T-cell (primary cell): ENCODE measurements at regions of chr7 and their contacts with region 1.

Region 1: DNA sequence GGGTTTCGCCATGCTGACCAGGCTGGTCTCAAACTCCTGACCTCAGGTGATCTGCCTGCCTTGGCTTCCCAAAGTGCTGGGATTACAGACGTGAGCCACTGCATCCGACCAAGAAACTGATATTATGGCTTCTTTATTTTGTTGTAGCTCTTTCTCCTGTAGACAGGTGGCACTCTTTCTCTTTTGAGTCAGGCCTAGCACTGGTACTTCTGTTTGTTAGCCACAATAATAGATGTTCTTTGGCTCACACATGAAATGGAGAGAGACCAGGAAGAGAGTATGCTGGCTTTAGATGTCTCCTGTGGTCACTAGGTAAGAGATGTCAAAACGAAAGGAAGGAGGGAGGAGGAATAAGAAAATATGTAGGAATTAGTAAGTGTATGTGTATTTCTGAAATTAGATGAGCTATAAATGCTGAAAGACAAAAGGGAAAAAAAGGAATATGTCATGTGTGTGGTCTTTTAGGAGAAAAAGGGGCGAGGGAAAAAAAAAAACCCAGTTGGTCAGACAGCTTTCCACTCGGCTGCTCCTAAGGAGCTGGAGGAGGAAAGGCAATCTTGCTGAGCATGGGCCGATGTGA is 78.7 kb downstream of the CLEC2L start:
- DNase-seq: peak in 1 of 35 experiments; percentile 50
- ATAC-seq: peak in 3 of 4 experiments; percentile 57 to 63 (median 61)
- H3K4me3 ChIP-seq: no peak overlapping the region
- H3K4me3 Mint-ChIP-seq: no peak overlapping the region
- H3K27ac ChIP-seq: no peak overlapping the region
- H3K27ac Mint-ChIP-seq: no peak overlapping the region
- H3K4me1 ChIP-seq: no peaks in the 10 kb centered on the region
- H3K4me1 Mint-ChIP-seq: no peaks in the 10 kb centered on the region
- H3K27me3 ChIP-seq: no peaks in the 10 kb centered on the region
- H3K27me3 Mint-ChIP-seq: no peaks in the 10 kb centered on the region

Region 2: GRCh38 chr7:139321071-139321745 is 281.0 kb before region 1 on chr7:
- CTCF ChIA-PET with region 1: interaction called in 1 of 2 experiments, 10 read pairs
- POLR2A ChIA-PET with region 1: no interaction called
- DNase-seq: peak in 1 of 35 experiments; percentile 14
- ATAC-seq: no peak
- H3K4me3 ChIP-seq: no peak overlapping the region
- H3K4me3 Mint-ChIP-seq: no peak overlapping the region
- H3K27ac ChIP-seq: no peak overlapping the region
- H3K27ac Mint-ChIP-seq: no peak overlapping the region
- H3K4me1 ChIP-seq: no peaks in the 10 kb centered on the region
- H3K4me1 Mint-ChIP-seq: no peaks in the 10 kb centered on the region
- H3K27me3 ChIP-seq: peaks cover 0 to 5% of the 10 kb centered on the region in 2 experiments
- H3K27me3 Mint-ChIP-seq: no peaks in the 10 kb centered on the region

Region 3: GRCh38 chr7:139591550-139592195 is 10.6 kb before region 1 on chr7:
- CTCF ChIA-PET with region 1: interaction called, 4 to 11 read pairs
- POLR2A ChIA-PET with region 1: interaction called in 1 of 2 experiments, 4 read pairs
- DNase-seq: no peak
- ATAC-seq: no peak
- H3K4me3 ChIP-seq: no peak overlapping the region
- H3K4me3 Mint-ChIP-seq: no peak overlapping the region
- H3K27ac ChIP-seq: no peak overlapping the region
- H3K27ac Mint-ChIP-seq: no peak overlapping the region
- H3K4me1 ChIP-seq: no peaks in the 10 kb centered on the region
- H3K4me1 Mint-ChIP-seq: no peaks in the 10 kb centered on the region
- H3K27me3 ChIP-seq: no peaks in the 10 kb centered on the region
- H3K27me3 Mint-ChIP-seq: no peaks in the 10 kb centered on the region

Region 4: GRCh38 chr7:139620676-139621344 is 18.6 kb after region 1 on chr7:
- CTCF ChIA-PET with region 1: interaction called, 5 to 10 read pairs
- POLR2A ChIA-PET with region 1: interaction called in 1 of 2 experiments, 4 read pairs
- DNase-seq: peak in 32 of 35 experiments; percentile 18 to 64 (median 45)
- ATAC-seq: peak; percentile 59 to 80 (median 65)
- H3K4me3 ChIP-seq: no peak overlapping the region
- H3K4me3 Mint-ChIP-seq: no peak overlapping the region
- H3K27ac ChIP-seq: no peak overlapping the region
- H3K27ac Mint-ChIP-seq: no peak overlapping the region
- H3K4me1 ChIP-seq: peaks cover 15 to 19% of the 10 kb centered on the region in 2 experiments
- H3K4me1 Mint-ChIP-seq: peaks cover 22 to 26% (median 23%) of the 10 kb centered on the region in 3 donors
- H3K27me3 ChIP-seq: no peaks in the 10 kb centered on the region
- H3K27me3 Mint-ChIP-seq: no peaks in the 10 kb centered on the region

Region 5: GRCh38 chr7:139666501-139666900 is 64.3 kb after region 1 on chr7:
- CTCF ChIA-PET with region 1: no interaction called
- POLR2A ChIA-PET with region 1: no interaction called
- DNase-seq: no peak
- ATAC-seq: no peak
- H3K4me3 ChIP-seq: no peak overlapping the region
- H3K4me3 Mint-ChIP-seq: no peak overlapping the region
- H3K27ac ChIP-seq: no peak overlapping the region
- H3K27ac Mint-ChIP-seq: no peak overlapping the region
- H3K4me1 ChIP-seq: peaks cover 6% of the 10 kb centered on the region in 2 experiments
- H3K4me1 Mint-ChIP-seq: peaks cover 39 to 43% (median 42%) of the 10 kb centered on the region in 3 donors
- H3K27me3 ChIP-seq: no peaks in the 10 kb centered on the region
- H3K27me3 Mint-ChIP-seq: no peaks in the 10 kb centered on the region

Region 6: DNA sequence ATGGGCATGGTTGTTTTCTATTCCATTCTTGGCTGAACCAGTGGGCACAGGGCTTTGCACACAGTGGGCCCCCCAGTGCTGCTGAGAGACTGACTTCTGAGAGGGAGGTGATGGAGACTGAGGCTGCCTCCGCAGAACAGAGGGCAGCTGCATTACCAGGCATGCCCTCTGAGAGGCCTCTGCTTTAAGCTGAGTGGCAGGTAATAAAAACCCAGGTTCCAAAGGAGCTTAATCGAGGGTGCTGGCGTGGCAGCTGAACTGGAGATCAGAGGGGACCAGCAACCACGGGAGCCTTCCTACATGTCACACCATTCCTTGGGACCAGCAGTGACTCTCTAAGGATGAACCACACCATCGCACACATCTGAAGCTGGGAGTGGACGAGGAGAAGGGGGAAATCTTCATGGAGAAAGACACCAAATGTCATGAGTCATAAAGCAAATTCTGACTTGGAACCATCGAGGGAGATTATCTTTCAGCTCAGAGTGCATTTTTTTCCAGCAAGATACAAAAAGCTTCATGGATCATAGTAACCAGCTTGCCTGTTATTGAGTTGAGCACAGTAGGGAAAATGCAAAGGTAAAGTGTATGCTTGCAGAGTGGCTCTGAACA is 151.0 kb after region 1 on chr7:
- CTCF ChIA-PET with region 1: no interaction called
- POLR2A ChIA-PET with region 1: no interaction called
- DNase-seq: peak in 1 of 35 experiments; percentile 10
- ATAC-seq: peak in 2 of 4 experiments; percentile 46 to 53
- H3K4me3 ChIP-seq: no peak overlapping the region
- H3K4me3 Mint-ChIP-seq: no peak overlapping the region
- H3K27ac ChIP-seq: no peak overlapping the region
- H3K27ac Mint-ChIP-seq: no peak overlapping the region
- H3K4me1 ChIP-seq: peaks cover 2 to 20% of the 10 kb centered on the region in 2 experiments
- H3K4me1 Mint-ChIP-seq: peaks cover 82 to 90% (median 83%) of the 10 kb centered on the region in 3 donors
- H3K27me3 ChIP-seq: no peaks in the 10 kb centered on the region
- H3K27me3 Mint-ChIP-seq: no peaks in the 10 kb centered on the region

Region 7: DNA sequence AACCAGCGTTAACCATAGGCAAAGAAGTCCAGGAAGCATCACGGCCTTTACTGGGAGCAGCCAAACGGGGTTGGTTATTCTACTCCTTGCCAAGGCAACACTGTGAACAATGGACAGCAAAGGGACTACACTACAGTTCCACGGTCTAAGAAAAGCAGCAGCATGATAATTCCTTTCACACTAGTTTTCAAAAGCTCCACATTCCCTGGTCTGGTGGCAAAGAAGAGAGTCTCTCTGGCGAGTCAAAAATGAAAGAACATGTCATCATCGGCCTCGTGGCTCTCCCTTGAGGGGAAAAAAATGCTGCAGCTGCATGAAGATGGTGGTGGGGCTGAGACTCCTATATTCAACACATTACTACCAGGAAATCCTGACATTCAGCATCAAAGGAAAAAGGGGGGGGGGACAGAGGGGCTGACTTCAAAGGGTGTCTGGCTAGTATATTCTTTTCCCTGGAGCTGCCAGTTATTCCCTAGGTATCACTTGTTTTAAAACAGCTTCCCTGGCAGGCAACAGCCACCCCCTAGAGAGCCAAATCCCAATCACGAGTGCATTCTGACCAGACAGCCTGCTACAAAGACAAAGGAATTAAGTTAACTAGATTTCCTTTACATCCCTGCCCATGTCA is 747.0 kb after region 1 on chr7:
- CTCF ChIA-PET with region 1: interaction called in 1 of 2 experiments, 6 read pairs
- POLR2A ChIA-PET with region 1: interaction called in 1 of 2 experiments, 11 read pairs
- DNase-seq: no peak
- ATAC-seq: no peak
- H3K4me3 ChIP-seq: no peak overlapping the region
- H3K4me3 Mint-ChIP-seq: no peak overlapping the region
- H3K27ac ChIP-seq: no peak overlapping the region
- H3K27ac Mint-ChIP-seq: no peak overlapping the region
- H3K4me1 ChIP-seq: no peaks in the 10 kb centered on the region
- H3K4me1 Mint-ChIP-seq: peaks cover 0 to 1% (median 0%) of the 10 kb centered on the region in 3 donors
- H3K27me3 ChIP-seq: no peaks in the 10 kb centered on the region
- H3K27me3 Mint-ChIP-seq: no peaks in the 10 kb centered on the region